ENCODE measurements at regions of chr1 and their contacts with region 1.

Region 1: GRCh38 chr1:235597867-235598553 is 51.6 kb downstream of the GNG4 start:
- DNase-seq: peak; percentile 17 to 28 (median 23)
- H3K4me3 ChIP-seq: no peak overlapping the region
- H3K27ac ChIP-seq: no peak overlapping the region
- H3K4me1 ChIP-seq: peaks cover 0 to 5% (median 0%) of the 10 kb centered on the region in 4 experiments
- H3K27me3 ChIP-seq: peaks cover 0 to 13% (median 0%) of the 10 kb centered on the region in 5 experiments

Region 2: DNA sequence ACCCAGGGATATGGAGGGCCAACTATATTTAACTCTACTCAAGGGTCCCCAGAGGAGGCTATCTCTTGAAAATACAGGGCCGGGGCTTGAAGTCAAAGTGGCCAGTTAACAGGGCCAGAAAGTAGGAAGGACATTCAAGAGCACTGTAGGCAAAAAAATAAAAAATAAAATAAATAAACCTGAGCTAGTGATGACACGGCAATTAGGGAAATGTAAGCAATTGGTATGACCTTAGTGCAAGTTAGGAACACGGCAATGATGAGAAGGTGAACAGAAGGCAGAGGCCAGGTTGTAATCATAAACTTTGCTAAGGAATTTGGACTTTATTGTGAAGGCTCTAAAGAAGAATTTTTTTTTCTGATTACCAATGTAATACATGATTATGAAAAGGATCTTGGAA is 90.4 kb before region 1 on chr1:
- CTCF ChIA-PET with region 1: interaction called, 10 read pairs
- POLR2A ChIA-PET with region 1: no interaction called
- DNase-seq: no peak
- H3K4me3 ChIP-seq: no peak overlapping the region
- H3K27ac ChIP-seq: no peak overlapping the region
- H3K4me1 ChIP-seq: peaks cover 5 to 21% (median 12%) of the 10 kb centered on the region in 4 experiments
- H3K27me3 ChIP-seq: peaks cover 0 to 4% (median 4%) of the 10 kb centered on the region in 5 experiments

Region 3: GRCh38 chr1:235513495-235514366 is 84.3 kb before region 1 on chr1:
- CTCF ChIA-PET with region 1: interaction called, 49 read pairs
- POLR2A ChIA-PET with region 1: no interaction called
- DNase-seq: peak; percentile 74 to 85 (median 77)
- H3K4me3 ChIP-seq: no peak overlapping the region
- H3K27ac ChIP-seq: no peak overlapping the region
- H3K4me1 ChIP-seq: no peaks in the 10 kb centered on the region
- H3K27me3 ChIP-seq: peaks cover 0 to 4% (median 0%) of the 10 kb centered on the region in 5 experiments

Region 4: GRCh38 chr1:235549351-235550139 is 48.5 kb before region 1 on chr1:
- CTCF ChIA-PET with region 1: interaction called, 22 read pairs
- POLR2A ChIA-PET with region 1: no interaction called
- DNase-seq: no peak
- H3K4me3 ChIP-seq: no peak overlapping the region
- H3K27ac ChIP-seq: no peak overlapping the region
- H3K4me1 ChIP-seq: no peaks in the 10 kb centered on the region
- H3K27me3 ChIP-seq: peaks cover 0 to 5% (median 0%) of the 10 kb centered on the region in 5 experiments

Region 5: GRCh38 chr1:235557495-235557894 is 40.5 kb before region 1 on chr1:
- CTCF ChIA-PET with region 1: interaction called, 22 read pairs
- POLR2A ChIA-PET with region 1: no interaction called
- DNase-seq: peak in 2 of 3 donors; percentile 8 to 26
- H3K4me3 ChIP-seq: no peak overlapping the region
- H3K27ac ChIP-seq: no peak overlapping the region
- H3K4me1 ChIP-seq: no peaks in the 10 kb centered on the region
- H3K27me3 ChIP-seq: no peaks in the 10 kb centered on the region

Region 6: DNA sequence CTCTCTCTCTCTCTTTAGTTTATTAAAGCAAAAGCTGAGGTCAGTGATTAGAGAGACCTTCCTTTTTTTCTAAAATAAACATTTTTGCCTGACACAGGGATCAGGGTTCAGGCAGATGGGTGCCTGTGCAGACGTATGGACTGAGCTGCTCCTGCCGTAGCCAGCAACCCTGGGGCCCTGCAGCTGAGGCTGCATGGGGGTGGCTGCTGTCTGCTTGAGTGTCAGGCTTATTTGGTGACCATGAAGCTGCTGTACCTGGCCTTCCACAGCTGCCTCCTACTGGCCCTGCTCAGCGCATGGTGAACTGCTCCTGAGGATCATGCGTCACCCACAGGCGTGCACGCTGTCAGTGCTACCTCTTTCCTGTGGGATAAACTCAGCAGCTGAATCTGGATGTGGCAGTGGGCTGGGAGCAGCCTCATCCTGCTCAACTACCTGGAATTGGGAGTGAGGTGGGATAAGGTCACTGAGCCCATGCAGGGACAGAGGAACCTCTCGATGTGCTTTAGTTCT is 16.5 kb after region 1 on chr1:
- CTCF ChIA-PET with region 1: interaction called, 28 read pairs
- POLR2A ChIA-PET with region 1: no interaction called
- DNase-seq: no peak
- H3K4me3 ChIP-seq: no peak overlapping the region
- H3K27ac ChIP-seq: no peak overlapping the region
- H3K4me1 ChIP-seq: no peaks in the 10 kb centered on the region
- H3K27me3 ChIP-seq: peaks cover 0 to 5% (median 0%) of the 10 kb centered on the region in 5 experiments

Region 7: DNA sequence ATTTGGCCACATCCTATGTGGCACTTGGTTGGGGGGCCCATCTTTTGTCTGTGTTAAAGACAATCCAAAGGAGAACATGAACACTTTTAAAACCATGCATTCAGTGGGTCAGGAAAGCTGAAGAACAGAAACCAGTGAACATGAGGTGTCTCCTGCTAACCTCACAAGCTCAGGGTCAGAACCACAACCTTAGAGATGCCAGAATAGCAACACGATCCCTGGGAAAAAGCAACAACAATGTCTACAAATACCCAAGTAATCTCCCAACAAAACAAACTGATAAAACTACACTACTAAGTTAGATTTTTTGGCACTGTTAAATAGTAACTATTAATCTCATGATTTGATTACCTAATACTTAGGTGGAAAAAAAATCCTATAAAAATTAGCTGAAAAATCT is 85.6 kb after region 1 on chr1:
- CTCF ChIA-PET with region 1: no interaction called
- POLR2A ChIA-PET with region 1: no interaction called
- DNase-seq: no peak
- H3K4me3 ChIP-seq: no peak overlapping the region
- H3K27ac ChIP-seq: no peak overlapping the region
- H3K4me1 ChIP-seq: no peaks in the 10 kb centered on the region
- H3K27me3 ChIP-seq: no peaks in the 10 kb centered on the region

Region 8: GRCh38 chr1:235708390-235708962 is 110.5 kb after region 1 on chr1:
- CTCF ChIA-PET with region 1: no interaction called
- POLR2A ChIA-PET with region 1: no interaction called
- DNase-seq: no peak
- H3K4me3 ChIP-seq: no peak overlapping the region
- H3K27ac ChIP-seq: no peak overlapping the region
- H3K4me1 ChIP-seq: no peaks in the 10 kb centered on the region
- H3K27me3 ChIP-seq: no peaks in the 10 kb centered on the region

Region 9: DNA sequence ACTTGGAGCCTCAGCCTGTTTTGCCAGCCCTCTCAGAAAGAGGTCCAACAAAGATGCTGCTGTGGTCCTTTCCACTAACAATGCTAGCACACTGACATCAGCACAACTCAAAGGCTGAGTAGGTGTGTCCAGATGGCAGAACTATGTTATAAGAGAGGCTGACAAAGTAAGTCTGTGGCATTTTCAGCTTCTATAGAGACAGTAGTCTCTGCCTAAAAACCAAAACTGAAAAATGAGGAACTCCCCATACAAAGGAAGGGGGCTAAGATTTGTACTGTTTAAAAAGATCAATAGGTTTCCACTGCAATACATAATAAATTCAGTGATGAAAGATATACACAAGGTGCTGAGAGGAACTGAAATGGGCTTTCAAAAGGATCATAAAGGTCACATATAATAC is 671.4 kb after region 1 on chr1:
- CTCF ChIA-PET with region 1: no interaction called
- POLR2A ChIA-PET with region 1: no interaction called
- DNase-seq: peak in 2 of 3 donors; percentile 20 to 35
- H3K4me3 ChIP-seq: no peak overlapping the region
- H3K27ac ChIP-seq: peak overlapping the region in 1 of 2 experiments; percentile 5
- H3K4me1 ChIP-seq: peaks cover 0 to 9% (median 4%) of the 10 kb centered on the region in 4 experiments
- H3K27me3 ChIP-seq: no peaks in the 10 kb centered on the region

Measured in common myeloid progenitor, CD34-positive (primary cell).